H1 (cell line): ENCODE measurements at regions of chr21 and their contacts with region 1.

Region 1: GRCh38 chr21:44792702-44793591 is 8.7 kb downstream of the UBE2G2 start:
- DNase-seq: peak in 1 of 2 experiments; percentile 55
- H3K4me3 ChIP-seq: no peak overlapping the region
- H3K27ac ChIP-seq: no peak overlapping the region
- H3K4me1 ChIP-seq: peaks cover 0 to 5% (median 4%) of the 10 kb centered on the region in 4 experiments; a peak in 3 of 7 replicates
- H3K27me3 ChIP-seq: no peaks in the 10 kb centered on the region
- CTCF ChIP-seq: peak; percentile 54 to 86 (median 77)
- EP300 ChIP-seq: no peak
- POLR2A ChIP-seq: no peak
- RAD21 ChIP-seq: peak; percentile 90 to 95

Region 2: DNA sequence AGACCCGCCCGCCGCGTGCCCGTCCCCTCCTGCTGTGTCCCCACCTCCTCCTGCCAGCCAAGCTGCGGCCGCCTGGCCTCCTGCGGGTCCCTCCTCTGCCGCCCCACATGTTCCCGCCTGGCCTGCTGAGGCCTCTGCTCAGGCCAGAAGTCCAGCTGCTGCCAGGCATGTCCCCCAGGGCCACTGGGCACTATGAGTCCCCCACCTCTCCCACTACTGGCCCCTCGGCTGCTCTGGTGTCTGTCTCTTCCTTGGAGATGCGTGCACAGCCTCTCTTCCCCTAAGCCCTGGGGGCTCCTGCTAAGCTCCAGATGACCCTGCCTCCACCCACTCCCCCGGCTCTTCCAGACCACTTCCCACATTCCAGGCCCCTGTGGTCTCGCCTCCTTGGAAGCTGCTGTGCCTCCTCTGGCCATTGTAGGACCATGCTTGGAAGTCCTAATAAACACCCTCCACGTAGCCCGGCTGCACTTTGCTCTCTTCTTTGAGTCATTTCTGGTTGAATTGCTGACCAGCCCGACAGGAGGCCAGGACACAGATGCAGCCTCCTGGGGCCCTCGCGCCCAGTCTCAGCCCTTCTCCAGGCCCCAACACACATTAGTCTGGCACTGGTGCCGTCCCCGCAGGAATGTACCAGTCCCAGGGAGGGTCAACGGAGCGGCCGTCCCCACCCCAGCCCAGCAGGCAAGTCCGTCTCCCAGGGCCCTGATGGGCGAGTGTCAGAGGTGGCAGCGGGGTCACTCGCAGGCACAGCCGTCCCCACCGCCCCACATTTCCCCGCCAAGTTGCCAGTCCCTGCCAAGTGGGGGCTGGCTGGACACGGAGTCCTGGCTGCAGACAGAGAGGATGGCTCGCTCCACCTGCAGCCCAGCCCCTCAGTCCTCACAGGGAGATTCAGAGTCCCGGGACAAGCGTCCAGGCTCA is 94.9 kb before region 1 on chr21:
- CTCF ChIA-PET with region 1: interaction called, 15 read pairs
- POLR2A ChIA-PET with region 1: interaction called, 3 read pairs
- DNase-seq: no peak
- H3K4me3 ChIP-seq: no peak overlapping the region
- H3K27ac ChIP-seq: peak overlapping the region; percentile 26; the same call in 1 of the 2 replicates
- H3K4me1 ChIP-seq: peaks cover 3 to 46% (median 29%) of the 10 kb centered on the region in 4 experiments
- H3K27me3 ChIP-seq: no peaks in the 10 kb centered on the region; a peak in 2 of 7 replicates
- CTCF ChIP-seq: no peak
- EP300 ChIP-seq: no peak
- POLR2A ChIP-seq: no peak
- RAD21 ChIP-seq: 0 out of 4 replicates have a peak, but pooled peaks of 1 of the 2 experiments have one; percentile 4

Region 3: DNA sequence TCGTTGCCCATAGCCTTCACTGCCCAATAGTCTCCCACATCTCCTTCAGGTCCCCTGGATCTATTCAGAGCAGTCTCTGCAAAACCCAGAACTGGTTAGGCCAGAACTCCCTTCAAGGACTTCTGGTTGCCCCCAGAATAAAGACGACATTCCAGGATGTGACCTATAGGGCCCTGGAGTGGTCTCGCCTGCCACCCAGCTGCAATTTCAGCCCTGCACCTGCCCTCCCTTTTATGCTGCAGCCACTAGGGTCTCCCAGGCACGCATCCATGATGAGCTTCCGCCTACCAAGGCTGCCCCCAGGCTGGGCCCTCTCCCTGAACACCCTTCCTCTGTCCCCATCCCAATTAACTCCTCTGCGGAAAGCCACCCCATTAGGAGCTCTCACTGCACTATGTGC is 74.4 kb before region 1 on chr21:
- CTCF ChIA-PET with region 1: interaction called, 14 read pairs
- POLR2A ChIA-PET with region 1: no interaction called
- DNase-seq: peak in 1 of 2 experiments; percentile 56
- H3K4me3 ChIP-seq: no peak overlapping the region
- H3K27ac ChIP-seq: no peak overlapping the region
- H3K4me1 ChIP-seq: peaks cover 5 to 18% (median 10%) of the 10 kb centered on the region in 4 experiments
- H3K27me3 ChIP-seq: peaks cover 0 to 17% (median 5%) of the 10 kb centered on the region in 4 experiments; a peak in 4 of 7 replicates
- CTCF ChIP-seq: peak; percentile 64 to 86 (median 69)
- EP300 ChIP-seq: no peak
- POLR2A ChIP-seq: no peak
- RAD21 ChIP-seq: peak; percentile 63 to 73

Region 4: DNA sequence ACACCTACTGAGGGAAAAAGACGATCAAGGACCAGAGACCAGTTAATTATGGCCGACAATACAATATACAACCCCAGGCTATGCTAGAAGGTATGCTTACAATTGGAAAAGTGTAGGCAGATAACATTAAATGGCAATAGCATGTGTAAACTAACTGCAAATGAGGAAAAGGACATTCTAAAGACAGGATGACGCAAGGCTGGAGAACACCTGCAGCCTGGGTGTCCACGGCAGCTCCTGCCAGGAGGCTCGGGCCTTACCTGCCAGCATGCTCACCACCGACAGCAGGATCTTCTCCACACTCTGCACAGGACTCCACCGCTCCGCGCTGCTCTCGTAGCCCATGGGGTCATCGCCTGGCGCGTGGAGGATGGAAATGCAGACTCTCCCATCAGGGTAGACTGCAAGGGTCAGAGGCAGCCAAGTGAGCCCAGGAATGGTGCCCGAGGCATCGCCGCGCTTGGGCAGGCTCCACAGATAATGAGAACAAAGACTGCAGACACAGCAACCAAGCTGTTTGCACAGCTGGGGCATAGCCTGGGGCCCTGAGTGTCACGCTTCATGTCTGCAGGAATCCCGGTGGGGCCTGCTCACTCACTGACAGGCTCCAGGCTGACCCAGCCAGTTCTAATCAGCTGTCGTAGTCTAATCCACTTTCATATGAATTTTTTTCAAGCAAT is 19.5 kb before region 1 on chr21:
- CTCF ChIA-PET with region 1: interaction called, 12 read pairs
- POLR2A ChIA-PET with region 1: interaction called, 5 read pairs
- DNase-seq: no peak
- H3K4me3 ChIP-seq: no peak overlapping the region
- H3K27ac ChIP-seq: no peak overlapping the region
- H3K4me1 ChIP-seq: peaks cover 3 to 5% (median 4%) of the 10 kb centered on the region in 4 experiments; a peak in 6 of 7 replicates
- H3K27me3 ChIP-seq: no peaks in the 10 kb centered on the region; a peak in 1 of 7 replicates
- CTCF ChIP-seq: no peak
- EP300 ChIP-seq: no peak
- POLR2A ChIP-seq: no peak
- RAD21 ChIP-seq: no peak

Region 5: DNA sequence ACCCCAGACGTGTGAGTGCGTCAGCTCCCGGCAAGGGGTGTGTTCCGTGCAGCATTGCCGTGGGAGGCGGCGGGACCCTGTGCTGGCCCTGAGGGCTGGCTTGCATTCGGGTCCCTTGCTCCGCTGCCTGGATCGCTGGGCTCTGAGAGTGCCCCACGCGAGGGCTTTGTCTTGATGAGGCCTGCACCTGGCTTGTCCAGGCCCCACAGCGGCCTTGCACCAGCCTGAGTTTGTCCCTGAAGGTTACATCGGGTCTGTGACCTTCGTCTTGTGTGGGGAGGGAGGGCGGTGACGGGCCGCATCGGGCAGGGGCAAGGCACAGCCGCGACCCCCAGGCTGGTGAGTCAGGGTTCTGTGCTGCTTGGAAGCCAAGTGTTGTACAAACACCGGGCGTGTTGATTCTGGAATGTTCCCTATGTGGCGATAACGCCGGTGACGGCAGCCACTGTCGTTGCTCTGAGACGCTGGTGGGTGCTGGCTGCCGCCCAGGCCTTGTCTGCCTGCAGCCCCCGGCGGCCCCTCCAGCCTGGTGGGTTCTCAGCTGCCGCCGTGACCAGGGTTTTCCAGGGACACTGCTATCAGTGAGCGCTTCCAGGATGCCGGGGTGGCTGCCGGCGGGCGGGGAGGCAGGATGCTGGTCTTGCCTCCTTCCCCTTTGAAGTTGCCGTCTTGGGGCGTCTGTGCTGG is 189.8 kb after region 1 on chr21:
- CTCF ChIA-PET with region 1: no interaction called
- POLR2A ChIA-PET with region 1: no interaction called
- DNase-seq: no peak
- H3K4me3 ChIP-seq: no peak overlapping the region
- H3K27ac ChIP-seq: no peak overlapping the region
- H3K4me1 ChIP-seq: peaks cover 0 to 3% (median 0%) of the 10 kb centered on the region in 4 experiments; a peak in 1 of 7 replicates
- H3K27me3 ChIP-seq: no peaks in the 10 kb centered on the region; a peak in 3 of 7 replicates
- CTCF ChIP-seq: no peak
- EP300 ChIP-seq: no peak
- POLR2A ChIP-seq: no peak
- RAD21 ChIP-seq: no peak